B cell (primary cell): ENCODE measurements at regions of chr14 and their contacts with region 1.

Region 1: DNA sequence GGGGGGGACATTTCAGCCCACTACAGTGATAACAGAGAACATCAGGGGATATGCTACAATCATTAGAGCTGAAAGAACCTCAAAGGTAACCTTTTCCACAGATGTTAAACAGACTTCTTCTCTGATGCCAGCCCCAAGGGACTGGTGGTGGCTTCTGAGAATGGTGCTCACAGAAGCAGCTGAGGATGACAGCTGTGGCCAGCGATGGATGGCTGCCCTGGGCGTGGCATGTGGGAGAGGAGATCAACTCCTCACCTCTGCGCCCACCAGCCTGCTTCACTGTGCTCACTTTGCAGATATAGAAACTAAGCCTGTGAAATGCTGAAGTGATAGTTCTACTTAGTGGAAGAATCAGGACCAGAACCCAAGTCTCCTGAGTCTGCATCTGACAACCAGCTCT is 33.0 kb downstream of the FOXN3 start:
- DNase-seq: peak; percentile 95
- ATAC-seq: peak; percentile 96
- H3K4me3 ChIP-seq: peak overlapping the region in 1 of 5 experiments; percentile 35
- H3K4me3 Mint-ChIP-seq: peak overlapping the region; percentile 46
- H3K27ac ChIP-seq: peak overlapping the region; percentile 69 to 72
- H3K27ac Mint-ChIP-seq: peak overlapping the region; percentile 86
- H3K4me1 ChIP-seq: peaks cover 58 to 65% of the 10 kb centered on the region in 2 donors
- H3K4me1 Mint-ChIP-seq: peaks cover 70% of the 10 kb centered on the region
- H3K27me3 ChIP-seq: no peaks in the 10 kb centered on the region
- H3K27me3 Mint-ChIP-seq: no peaks in the 10 kb centered on the region
- CTCF ChIP-seq: no peak

Region 2: DNA sequence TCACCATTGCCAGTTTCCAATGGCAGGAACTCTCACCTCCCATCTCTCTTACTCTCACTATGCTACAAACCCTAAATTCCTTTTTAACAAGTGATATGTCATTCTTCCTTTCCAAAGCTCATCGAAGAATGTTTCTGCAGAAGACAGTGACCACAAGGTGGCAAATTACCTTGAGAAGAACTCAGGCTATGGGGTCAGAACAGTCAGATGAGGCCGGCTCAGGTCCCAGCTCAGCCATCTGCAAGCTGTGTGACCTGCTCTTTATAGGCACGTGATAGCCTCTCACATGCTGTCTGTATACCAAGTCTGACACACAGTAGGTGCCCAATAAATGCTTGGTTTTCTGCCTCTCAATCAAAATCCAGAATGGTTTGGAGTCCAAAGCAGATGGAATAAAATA is 47.7 kb before region 1 on chr14:
- CTCF ChIA-PET with region 1: interaction called, 35 read pairs
- POLR2A ChIA-PET with region 1: interaction called, 4 read pairs
- intact Hi-C with region 1: loop called (anchors 5 kb)
- DNase-seq: peak; percentile 69
- ATAC-seq: peak; percentile 69
- H3K4me3 ChIP-seq: no peak overlapping the region
- H3K4me3 Mint-ChIP-seq: no peak overlapping the region
- H3K27ac ChIP-seq: peak overlapping the region in 1 of 2 donors; percentile 31
- H3K27ac Mint-ChIP-seq: peak overlapping the region; percentile 62
- H3K4me1 ChIP-seq: peaks cover 39 to 42% of the 10 kb centered on the region in 2 donors
- H3K4me1 Mint-ChIP-seq: peaks cover 67% of the 10 kb centered on the region
- H3K27me3 ChIP-seq: no peaks in the 10 kb centered on the region
- H3K27me3 Mint-ChIP-seq: no peaks in the 10 kb centered on the region
- CTCF ChIP-seq: peak; percentile 52

Region 3: DNA sequence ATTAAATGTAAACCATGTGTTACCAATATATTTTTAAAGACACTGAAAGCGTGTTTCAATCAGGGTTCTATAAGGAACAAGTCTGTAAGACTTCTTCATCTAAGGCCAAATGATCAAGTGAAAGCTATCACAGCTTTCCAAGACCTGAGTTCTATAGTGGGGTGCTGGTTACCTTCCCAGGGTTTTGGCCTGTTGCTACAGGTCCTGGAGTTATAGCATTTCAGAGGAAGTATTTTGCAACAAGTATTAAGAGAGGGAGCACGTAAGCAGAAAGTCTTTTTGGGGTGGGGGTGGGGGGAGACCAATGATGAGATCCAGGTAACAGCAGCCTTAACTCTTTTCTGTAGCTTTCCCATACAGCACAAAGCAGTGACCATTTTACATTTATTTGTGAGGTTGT is 10.8 kb before region 1 on chr14:
- CTCF ChIA-PET with region 1: interaction called, 4 read pairs
- POLR2A ChIA-PET with region 1: interaction called, 4 read pairs
- intact Hi-C with region 1: loop called (anchors 1 kb)
- DNase-seq: no peak
- ATAC-seq: no peak
- H3K4me3 ChIP-seq: no peak overlapping the region
- H3K4me3 Mint-ChIP-seq: peak overlapping the region; percentile 59
- H3K27ac ChIP-seq: peak overlapping the region in 1 of 2 donors; percentile 48
- H3K27ac Mint-ChIP-seq: peak overlapping the region; percentile 85
- H3K4me1 ChIP-seq: peaks cover 30 to 34% of the 10 kb centered on the region in 2 donors
- H3K4me1 Mint-ChIP-seq: peaks cover 67% of the 10 kb centered on the region
- H3K27me3 ChIP-seq: no peaks in the 10 kb centered on the region
- H3K27me3 Mint-ChIP-seq: no peaks in the 10 kb centered on the region
- CTCF ChIP-seq: no peak

Region 4: DNA sequence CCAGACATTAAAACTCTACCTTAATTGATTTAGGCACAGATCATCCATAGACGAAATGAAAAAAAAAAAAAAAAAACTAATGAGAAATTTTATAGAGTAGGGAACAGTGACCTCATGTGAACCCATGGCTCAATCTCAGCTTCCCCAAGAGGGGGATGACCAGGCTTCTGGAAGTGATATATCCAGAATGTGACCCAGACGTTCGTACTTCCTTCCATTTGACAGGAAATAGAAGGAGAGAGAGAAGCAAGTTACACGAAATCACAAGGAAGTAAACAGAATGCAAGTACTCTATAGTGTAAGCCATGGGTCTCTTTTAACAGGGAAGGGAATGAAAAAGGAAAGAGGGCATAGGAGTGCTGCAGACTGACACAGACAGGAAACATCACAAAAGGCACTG is 22.9 kb after region 1 on chr14:
- CTCF ChIA-PET with region 1: no interaction called
- POLR2A ChIA-PET with region 1: no interaction called
- intact Hi-C with region 1: no loop called
- DNase-seq: no peak
- ATAC-seq: no peak
- H3K4me3 ChIP-seq: no peak overlapping the region
- H3K4me3 Mint-ChIP-seq: no peak overlapping the region
- H3K27ac ChIP-seq: peak overlapping the region in 1 of 2 donors; percentile 6
- H3K27ac Mint-ChIP-seq: peak overlapping the region; percentile 13
- H3K4me1 ChIP-seq: peaks cover 24 to 27% of the 10 kb centered on the region in 2 donors
- H3K4me1 Mint-ChIP-seq: peaks cover 72% of the 10 kb centered on the region
- H3K27me3 ChIP-seq: no peaks in the 10 kb centered on the region
- H3K27me3 Mint-ChIP-seq: no peaks in the 10 kb centered on the region
- CTCF ChIP-seq: no peak

Region 5: GRCh38 chr14:89493877-89494634 is 110.0 kb after region 1 on chr14:
- CTCF ChIA-PET with region 1: no interaction called
- POLR2A ChIA-PET with region 1: no interaction called
- intact Hi-C with region 1: loop called (anchors 1 kb)
- DNase-seq: peak; percentile 92
- ATAC-seq: peak; percentile 99
- H3K4me3 ChIP-seq: peak overlapping the region in 4 of 5 experiments; percentile 3 to 46 (median 22)
- H3K4me3 Mint-ChIP-seq: peak overlapping the region; percentile 74
- H3K27ac ChIP-seq: peak overlapping the region; percentile 35 to 77
- H3K27ac Mint-ChIP-seq: peak overlapping the region; percentile 76
- H3K4me1 ChIP-seq: peaks cover 20 to 21% of the 10 kb centered on the region in 2 donors
- H3K4me1 Mint-ChIP-seq: peaks cover 29% of the 10 kb centered on the region
- H3K27me3 ChIP-seq: no peaks in the 10 kb centered on the region
- H3K27me3 Mint-ChIP-seq: no peaks in the 10 kb centered on the region
- CTCF ChIP-seq: no peak

Region 6: GRCh38 chr14:89519040-89519439 is 135.0 kb after region 1 on chr14:
- CTCF ChIA-PET with region 1: no interaction called
- POLR2A ChIA-PET with region 1: no interaction called
- intact Hi-C with region 1: no loop called
- DNase-seq: no peak
- ATAC-seq: no peak
- H3K4me3 ChIP-seq: no peak overlapping the region
- H3K4me3 Mint-ChIP-seq: no peak overlapping the region
- H3K27ac ChIP-seq: no peak overlapping the region
- H3K27ac Mint-ChIP-seq: no peak overlapping the region
- H3K4me1 ChIP-seq: no peaks in the 10 kb centered on the region
- H3K4me1 Mint-ChIP-seq: peaks cover 15% of the 10 kb centered on the region
- H3K27me3 ChIP-seq: no peaks in the 10 kb centered on the region
- H3K27me3 Mint-ChIP-seq: no peaks in the 10 kb centered on the region
- CTCF ChIP-seq: no peak